ENCODE measurements at regions of chr16 and their contacts with region 1.

Region 1: GRCh38 chr16:2155091-2156021 is at the start of gene TRAF7:
- DNase-seq: peak; percentile 100
- ATAC-seq: peak; percentile 74
- H3K4me3 ChIP-seq: peak within 1 kb of the TSS; percentile 98 to 100
- H3K27ac ChIP-seq: peak within 1 kb of the TSS; percentile 84
- H3K4me1 ChIP-seq: peaks cover 48 to 74% of the 10 kb centered on the region in 2 experiments
- H3K27me3 ChIP-seq: no peaks in the 10 kb centered on the region
- CTCF ChIP-seq: no peak
- POLR2A ChIP-seq: peak; percentile 99
- RAD21 ChIP-seq: no peak
- total RNA-seq, gene TRAF7: 160 TPM

Region 2: GRCh38 chr16:2166757-2167638 is 11.6 kb after region 1 on chr16:
- CTCF ChIA-PET with region 1: no interaction called
- POLR2A ChIA-PET with region 1: interaction called, 14 read pairs
- RAD21 ChIA-PET with region 1: no interaction called
- intact Hi-C with region 1: no loop called
- DNase-seq: no peak
- ATAC-seq: no peak
- H3K4me3 ChIP-seq: no peak overlapping the region
- H3K27ac ChIP-seq: no peak overlapping the region; the same call in 1 of the 2 replicates
- H3K4me1 ChIP-seq: peaks cover 16 to 20% of the 10 kb centered on the region in 2 experiments
- H3K27me3 ChIP-seq: no peaks in the 10 kb centered on the region
- CTCF ChIP-seq: no peak
- POLR2A ChIP-seq: no peak
- RAD21 ChIP-seq: no peak

Region 3: GRCh38 chr16:2223375-2224182 is 68.2 kb after region 1 on chr16 and contains the start of gene E4F1:
- CTCF ChIA-PET with region 1: no interaction called
- POLR2A ChIA-PET with region 1: interaction called, 3 read pairs
- RAD21 ChIA-PET with region 1: no interaction called
- intact Hi-C with region 1: loop called (anchors 5 kb)
- DNase-seq: peak; percentile 99
- ATAC-seq: peak; percentile 93
- H3K4me3 ChIP-seq: peak within 1 kb of the TSS; percentile 73 to 98
- H3K27ac ChIP-seq: peak within 1 kb of the TSS; percentile 97
- H3K4me1 ChIP-seq: peaks cover 25 to 30% of the 10 kb centered on the region in 2 experiments
- H3K27me3 ChIP-seq: no peaks in the 10 kb centered on the region
- CTCF ChIP-seq: no peak
- POLR2A ChIP-seq: peak; percentile 87
- RAD21 ChIP-seq: no peak
- total RNA-seq, gene E4F1: 40.7 TPM

Region 4: GRCh38 chr16:2339521-2340484 is 184.4 kb after region 1 on chr16:
- CTCF ChIA-PET with region 1: no interaction called
- POLR2A ChIA-PET with region 1: no interaction called
- RAD21 ChIA-PET with region 1: no interaction called
- intact Hi-C with region 1: no loop called
- DNase-seq: no peak
- ATAC-seq: peak; percentile 66
- H3K4me3 ChIP-seq: peak overlapping the region; percentile 59 to 70
- H3K27ac ChIP-seq: peak overlapping the region; percentile 40; the same call in 1 of the 2 replicates
- H3K4me1 ChIP-seq: peaks cover 0 to 15% of the 10 kb centered on the region in 2 experiments; a peak in 2 of 4 replicates
- H3K27me3 ChIP-seq: no peaks in the 10 kb centered on the region
- CTCF ChIP-seq: no peak
- POLR2A ChIP-seq: no peak
- RAD21 ChIP-seq: no peak